ENCODE measurements at regions of chr1 and their contacts with region 1.

Region 1: DNA sequence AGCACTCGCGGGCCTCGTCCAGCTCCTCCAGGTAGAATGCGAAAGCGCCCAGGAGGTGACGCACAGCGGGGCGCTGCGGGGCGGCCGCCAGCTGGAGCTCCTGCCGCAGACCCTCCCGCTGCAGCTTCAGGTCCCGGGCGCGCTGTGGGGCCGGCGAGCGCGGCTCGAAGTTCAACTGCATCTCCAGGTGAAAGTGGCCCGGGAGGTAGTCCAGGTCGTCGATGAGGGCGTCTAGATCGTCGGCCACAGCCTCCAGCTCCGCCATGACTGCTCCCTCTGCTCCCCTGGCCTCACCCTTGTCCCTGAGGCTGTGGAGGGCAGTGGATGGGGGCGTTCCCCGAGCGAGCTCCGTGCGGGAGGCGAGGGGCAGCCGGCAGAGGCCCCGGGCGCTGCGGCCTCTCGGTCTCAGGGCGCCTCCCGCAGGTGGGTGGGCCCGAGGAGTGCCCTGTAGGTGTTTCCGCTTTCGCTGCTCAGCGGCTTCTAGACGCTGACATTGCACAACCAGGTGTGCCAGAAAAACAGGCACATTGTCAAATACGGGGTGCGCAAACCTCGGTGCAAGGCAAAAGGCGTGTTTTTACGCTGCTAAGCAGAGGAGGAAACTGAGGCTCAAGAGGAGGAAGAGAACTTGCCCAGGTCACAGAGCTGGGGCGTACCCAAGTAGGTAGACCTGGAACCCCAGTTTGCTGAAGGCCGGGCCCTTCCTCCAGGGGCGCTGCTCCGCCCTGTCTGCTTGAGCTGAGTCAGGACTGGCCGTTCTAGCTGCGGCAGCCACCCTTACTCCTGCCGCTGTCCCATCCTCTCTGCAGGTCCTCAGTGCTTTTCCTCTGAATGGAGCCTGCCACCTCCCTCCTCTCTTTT is at the start of gene TTC22:
- DNase-seq: peak; percentile 84
- H3K4me3 Mint-ChIP-seq: peak within 1 kb of the TSS; percentile 83
- H3K27ac Mint-ChIP-seq: peak within 1 kb of the TSS; percentile 88
- H3K4me1 Mint-ChIP-seq: peaks cover 64% of the 10 kb centered on the region
- H3K27me3 Mint-ChIP-seq: no peaks in the 10 kb centered on the region

Region 2: GRCh38 chr1:54671985-54672608 is 129.0 kb before region 1 on chr1:
- CTCF ChIA-PET with region 1: interaction called, 21 read pairs
- DNase-seq: peak; percentile 82
- H3K4me3 Mint-ChIP-seq: no peak overlapping the region
- H3K27ac Mint-ChIP-seq: no peak overlapping the region
- H3K4me1 Mint-ChIP-seq: peaks cover 6% of the 10 kb centered on the region
- H3K27me3 Mint-ChIP-seq: peaks cover 11% of the 10 kb centered on the region

Region 3: GRCh38 chr1:54715493-54716298 is 85.4 kb before region 1 on chr1 and contains the start of gene TTC4:
- CTCF ChIA-PET with region 1: interaction called, 11 read pairs
- DNase-seq: peak; percentile 84
- H3K4me3 Mint-ChIP-seq: peak within 1 kb of the TSS; percentile 86
- H3K27ac Mint-ChIP-seq: peak within 1 kb of the TSS; percentile 24
- H3K4me1 Mint-ChIP-seq: peaks cover 28% of the 10 kb centered on the region
- H3K27me3 Mint-ChIP-seq: peaks cover 11% of the 10 kb centered on the region

Region 4: GRCh38 chr1:54764133-54764921 is 36.8 kb before region 1 on chr1 and contains the start of gene PARS2:
- CTCF ChIA-PET with region 1: interaction called, 20 read pairs
- DNase-seq: peak; percentile 97
- H3K4me3 Mint-ChIP-seq: peak within 1 kb of the TSS; percentile 95
- H3K27ac Mint-ChIP-seq: peak within 1 kb of the TSS; percentile 81
- H3K4me1 Mint-ChIP-seq: peaks cover 19% of the 10 kb centered on the region
- H3K27me3 Mint-ChIP-seq: peaks cover 9% of the 10 kb centered on the region

Measured in activated naive CD4-positive, alpha-beta T cell treated with anti-CD3 and anti-CD28 coated beads, Interleukin-2, amount 10 ng/mL, durations not matched to agents 7 days and 5 days (primary cell).